ENCODE measurements at regions of chr12 and their contacts with region 1.

Region 1: GRCh38 chr12:92297932-92298696 is 152.5 kb upstream of the BTG1 start:
- DNase-seq: peak; percentile 10
- H3K4me3 Mint-ChIP-seq: no peak overlapping the region
- H3K27ac Mint-ChIP-seq: peak overlapping the region; percentile 77
- H3K4me1 Mint-ChIP-seq: peaks cover 10% of the 10 kb centered on the region
- H3K27me3 Mint-ChIP-seq: no peaks in the 10 kb centered on the region

Region 2: DNA sequence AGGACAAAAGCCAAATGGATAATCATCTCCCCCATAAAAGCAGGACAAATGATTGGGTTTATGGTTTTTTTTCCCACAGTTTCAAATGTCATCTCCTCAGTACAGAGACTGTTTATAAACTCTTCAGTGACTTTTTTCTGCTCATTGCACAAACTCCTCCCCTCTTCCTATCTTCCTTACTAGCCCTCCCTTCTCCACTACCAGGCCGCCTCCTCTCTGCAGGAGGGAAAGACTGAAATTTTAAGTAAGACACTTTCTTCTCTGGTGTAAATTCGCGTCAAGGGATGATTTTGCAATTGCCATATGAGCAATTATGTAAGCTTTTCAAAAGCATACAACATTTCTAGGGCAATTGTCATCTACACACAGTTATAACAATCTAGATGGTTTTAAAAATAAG is 189.5 kb before region 1 on chr12:
- intact Hi-C with region 1: no loop called
- DNase-seq: no peak
- H3K4me3 Mint-ChIP-seq: no peak overlapping the region
- H3K27ac Mint-ChIP-seq: no peak overlapping the region
- H3K4me1 Mint-ChIP-seq: peaks cover 52% of the 10 kb centered on the region
- H3K27me3 Mint-ChIP-seq: no peaks in the 10 kb centered on the region

Region 3: DNA sequence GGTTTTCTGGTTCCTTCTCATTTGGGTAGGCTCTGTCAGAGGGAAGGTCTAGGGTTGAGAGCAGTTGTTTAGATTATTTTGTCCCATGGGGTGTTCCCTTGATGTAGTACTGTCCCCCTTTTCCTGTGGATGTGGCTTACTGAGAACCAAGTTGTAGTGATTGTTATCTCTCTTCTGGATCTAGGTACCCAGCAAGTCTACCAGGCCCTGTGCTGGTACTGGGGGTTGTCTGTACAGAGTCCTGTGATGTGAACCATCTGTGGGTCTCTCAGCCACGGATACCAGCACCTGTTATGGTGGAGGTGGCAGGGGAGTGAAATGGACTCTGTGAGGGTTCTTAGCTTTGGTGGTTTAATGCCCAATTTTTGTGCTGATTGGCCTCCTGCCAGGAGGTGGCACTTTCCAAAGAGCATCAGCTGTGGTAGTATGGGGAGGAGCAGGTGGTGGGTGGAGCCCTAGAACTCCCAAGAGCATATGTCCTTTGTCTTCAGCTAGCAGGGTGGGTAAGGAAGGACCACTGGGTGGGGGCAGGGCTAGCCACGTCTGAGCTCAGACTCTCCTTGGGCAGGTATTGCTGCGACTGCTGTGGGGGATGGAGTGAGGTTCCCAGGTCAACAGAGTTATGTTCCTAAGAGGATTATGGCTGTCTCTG is 26.9 kb after region 1 on chr12:
- intact Hi-C with region 1: loop called (anchors 1 kb)
- DNase-seq: no peak
- H3K4me3 Mint-ChIP-seq: no peak overlapping the region
- H3K27ac Mint-ChIP-seq: no peak overlapping the region
- H3K4me1 Mint-ChIP-seq: peaks cover 13% of the 10 kb centered on the region
- H3K27me3 Mint-ChIP-seq: no peaks in the 10 kb centered on the region

Measured in activated T-helper 2 cell treated with anti-CD3 and anti-CD28 coated beads, Interferon-gamma antibody, Interleukin-2, Interleukin-4, amounts not matched to agents 10 μg/mL and 5 μg/mL and 100 μg/mL, durations not matched to agents 14 hours and 24 hours and 36 hours (primary cell).